ENCODE measurements at regions of chr17 and their contacts with region 1.

Region 1: GRCh38 chr17:3845621-3846441 is at the start of gene NCBP3:
- DNase-seq: peak; percentile 90 to 95 (median 92)
- ATAC-seq: peak; percentile 90 to 99 (median 98)
- H3K4me3 ChIP-seq: peak within 1 kb of the TSS; percentile 69 to 100 (median 90)
- H3K27ac ChIP-seq: peak within 1 kb of the TSS; percentile 48 to 96 (median 92)
- H3K4me1 ChIP-seq: peaks cover 0 to 30% (median 15%) of the 10 kb centered on the region in 12 donors
- H3K27me3 ChIP-seq: peaks cover 0 to 2% (median 0%) of the 10 kb centered on the region in 9 donors
- CTCF ChIP-seq: peak; percentile 86 to 99 (median 96)
- POLR2A ChIP-seq: peak; percentile 23 to 93
- total RNA-seq, gene NCBP3: 10.6 to 26.4 (median 21.6) TPM

Region 2: GRCh38 chr17:3754458-3755334 is 91.1 kb before region 1 on chr17:
- intact Hi-C with region 1: no loop called
- DNase-seq: peak in 1 of 5 donors; percentile 32
- ATAC-seq: peak in 3 of 4 donors; percentile 39 to 64 (median 51)
- H3K4me3 ChIP-seq: peak overlapping the region in 2 of 12 donors; percentile 13 to 17
- H3K27ac ChIP-seq: no peak overlapping the region
- H3K4me1 ChIP-seq: peaks cover 0 to 9% (median 0%) of the 10 kb centered on the region in 12 donors
- H3K27me3 ChIP-seq: peaks cover 0 to 9% (median 0%) of the 10 kb centered on the region in 9 donors
- CTCF ChIP-seq: no peak
- POLR2A ChIP-seq: no peak

Region 3: GRCh38 chr17:3788200-3788599 is 57.6 kb before region 1 on chr17:
- intact Hi-C with region 1: no loop called
- DNase-seq: no peak
- ATAC-seq: no peak
- H3K4me3 ChIP-seq: no peak overlapping the region
- H3K27ac ChIP-seq: no peak overlapping the region
- H3K4me1 ChIP-seq: peaks cover 0 to 7% (median 0%) of the 10 kb centered on the region in 12 donors
- H3K27me3 ChIP-seq: no peaks in the 10 kb centered on the region
- CTCF ChIP-seq: no peak
- POLR2A ChIP-seq: no peak

Region 4: DNA sequence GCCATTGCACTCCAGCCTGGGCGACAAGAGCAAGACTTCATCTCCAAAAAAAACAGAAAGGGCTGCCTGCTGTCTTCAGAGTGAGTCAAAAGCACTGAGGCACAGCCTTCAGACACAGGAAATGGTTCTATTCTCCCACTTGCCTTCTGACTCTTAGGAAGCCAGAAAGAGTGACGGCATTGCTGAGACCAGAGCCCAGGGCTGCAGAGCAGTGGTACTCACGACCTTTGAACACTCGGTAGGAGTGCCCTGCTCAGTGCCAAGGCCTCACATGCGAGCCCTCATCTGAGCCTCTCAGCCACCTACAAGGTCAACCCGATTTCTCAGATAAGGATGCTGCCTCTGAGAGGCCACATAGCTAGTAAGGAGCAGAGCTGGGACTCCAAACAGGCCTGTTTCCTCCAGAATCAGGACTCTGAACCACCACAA is 41.3 kb before region 1 on chr17:
- intact Hi-C with region 1: no loop called
- DNase-seq: no peak
- ATAC-seq: no peak
- H3K4me3 ChIP-seq: no peak overlapping the region
- H3K27ac ChIP-seq: no peak overlapping the region
- H3K4me1 ChIP-seq: peaks cover 0 to 30% (median 0%) of the 10 kb centered on the region in 12 donors
- H3K27me3 ChIP-seq: no peaks in the 10 kb centered on the region
- CTCF ChIP-seq: no peak
- POLR2A ChIP-seq: no peak

Region 5: DNA sequence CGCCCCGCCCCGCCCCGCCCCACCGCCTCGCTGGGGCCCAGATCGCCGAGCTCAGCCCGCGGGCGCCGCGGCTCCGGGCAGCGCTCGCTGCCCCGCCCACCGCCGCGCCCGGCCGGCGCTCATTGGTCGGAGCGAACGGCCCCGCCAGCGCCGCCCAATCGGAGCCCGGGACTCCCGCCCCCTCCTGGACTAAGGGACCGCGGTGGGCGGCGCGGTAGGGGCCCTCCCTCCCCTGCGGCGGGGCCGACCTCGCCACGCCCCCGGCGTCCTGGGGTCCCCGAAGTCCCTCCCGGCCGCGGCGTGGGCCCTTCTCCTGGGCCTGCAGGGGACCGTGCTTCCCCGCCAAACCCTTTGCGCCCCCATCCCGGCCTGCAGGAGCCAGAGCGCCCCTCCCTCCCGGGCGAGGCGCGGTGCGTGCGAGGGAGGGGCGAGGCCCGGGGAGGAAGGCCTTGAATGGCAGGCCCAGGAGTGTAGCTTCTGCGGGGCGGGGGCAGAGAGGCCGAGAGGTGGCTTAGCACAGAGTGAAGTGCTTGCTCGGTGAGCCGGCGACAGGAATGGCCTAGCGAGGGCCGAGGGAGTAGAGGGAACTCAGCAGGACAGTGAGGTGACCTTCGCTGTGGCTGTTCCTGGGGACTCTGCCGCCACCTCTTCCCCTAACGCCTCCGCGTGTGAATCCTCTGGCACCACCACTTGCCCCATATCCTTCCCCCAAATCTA is 47.3 kb after region 1 on chr17 and contains the start of gene CAMKK1:
- intact Hi-C with region 1: loop called in 1 of 10 experiments (anchors 2 kb)
- DNase-seq: peak; percentile 92 to 95 (median 93)
- ATAC-seq: peak; percentile 73 to 90 (median 81)
- H3K4me3 ChIP-seq: peak within 1 kb of the TSS; percentile 41 to 89 (median 76)
- H3K27ac ChIP-seq: peak within 1 kb of the TSS; percentile 64 to 92 (median 84)
- H3K4me1 ChIP-seq: peaks cover 4 to 75% (median 61%) of the 10 kb centered on the region in 12 donors
- H3K27me3 ChIP-seq: no peaks in the 10 kb centered on the region
- CTCF ChIP-seq: peak in 4 of 12 donors; percentile 9 to 35 (median 12)
- POLR2A ChIP-seq: no peak
- total RNA-seq, gene CAMKK1: 2.0 to 6.8 (median 4.3) TPM

Region 6: DNA sequence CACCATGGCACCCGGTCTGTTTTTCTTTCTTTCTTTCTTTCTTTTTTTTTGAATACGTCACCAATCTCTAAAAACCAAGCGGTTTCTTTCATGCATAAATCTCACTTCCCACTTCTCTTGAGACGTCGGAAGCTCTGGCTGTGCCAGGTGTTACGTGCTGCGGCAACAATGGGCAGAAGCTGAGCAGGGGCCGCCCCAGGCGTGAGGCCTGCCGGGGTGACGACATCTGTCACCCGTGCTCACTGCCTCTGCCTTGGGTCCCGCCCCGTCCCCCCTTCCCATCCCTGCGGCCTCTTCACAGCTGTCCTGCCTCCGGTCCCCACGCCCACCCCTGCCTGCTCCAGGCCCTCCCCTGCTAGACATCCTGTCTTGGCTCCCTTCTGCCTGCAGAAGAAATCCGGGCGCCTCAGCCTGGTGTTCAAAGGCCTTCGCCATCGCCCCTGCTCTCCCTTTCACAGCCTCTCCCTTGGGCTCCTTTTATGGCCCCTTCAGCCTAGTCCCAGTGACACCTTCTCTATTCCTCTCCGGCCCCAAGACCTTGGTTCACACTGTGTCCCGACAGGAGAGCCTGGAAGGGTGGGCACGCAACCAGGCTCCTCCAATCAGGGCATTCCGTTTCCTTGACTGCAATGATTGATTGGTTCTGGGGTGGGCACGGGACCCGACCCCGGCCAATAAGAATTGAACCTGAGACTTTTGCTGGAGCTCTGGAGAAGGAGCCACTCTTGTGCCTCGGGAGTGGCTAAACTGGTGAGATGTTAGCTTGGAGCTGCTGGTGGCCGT is 65.6 kb after region 1 on chr17:
- intact Hi-C with region 1: no loop called
- DNase-seq: peak in 3 of 5 donors; percentile 52 to 73 (median 66)
- ATAC-seq: peak; percentile 17 to 84 (median 52)
- H3K4me3 ChIP-seq: no peak overlapping the region
- H3K27ac ChIP-seq: peak overlapping the region in 4 of 12 donors; percentile 21 to 55 (median 26)
- H3K4me1 ChIP-seq: peaks cover 0 to 39% (median 15%) of the 10 kb centered on the region in 12 donors
- H3K27me3 ChIP-seq: no peaks in the 10 kb centered on the region
- CTCF ChIP-seq: no peak
- POLR2A ChIP-seq: no peak